ENCODE measurements at regions of chr5 and their contacts with region 1.

Region 1: GRCh38 chr5:139696894-139697658 is 48.9 kb downstream of the CXXC5 start:
- DNase-seq: no peak
- ATAC-seq: peak; percentile 46
- H3K4me3 ChIP-seq: 0 out of 2 replicates have a peak overlapping the region, but pooled peaks have one; percentile 17
- H3K27ac ChIP-seq: no peak overlapping the region
- H3K4me1 ChIP-seq: peaks cover 12% of the 10 kb centered on the region
- H3K27me3 ChIP-seq: peaks cover 0 to 3% of the 10 kb centered on the region in 2 experiments; a peak in 2 of 4 replicates
- CTCF ChIP-seq: no peak
- EP300 ChIP-seq: no peak
- POLR2A ChIP-seq: no peak
- RAD21 ChIP-seq: no peak

Region 2: GRCh38 chr5:139740138-139740991 is 43.3 kb after region 1 on chr5:
- CTCF ChIA-PET with region 1: interaction called, 8 read pairs
- POLR2A ChIA-PET with region 1: interaction called, 5 read pairs
- RAD21 ChIA-PET with region 1: interaction called, 23 read pairs
- SMC1A ChIA-PET with region 1: interaction called, 35 read pairs
- in situ Hi-C with region 1: no loop called
- intact Hi-C with region 1: no loop called
- DNase-seq: no peak
- ATAC-seq: peak; percentile 40
- H3K4me3 ChIP-seq: no peak overlapping the region
- H3K27ac ChIP-seq: no peak overlapping the region
- H3K4me1 ChIP-seq: peaks cover 25% of the 10 kb centered on the region
- H3K27me3 ChIP-seq: no peaks in the 10 kb centered on the region
- CTCF ChIP-seq: no peak
- EP300 ChIP-seq: no peak
- POLR2A ChIP-seq: no peak
- RAD21 ChIP-seq: no peak

Region 3: GRCh38 chr5:139904816-139905661 is 208.0 kb after region 1 on chr5:
- CTCF ChIA-PET with region 1: no interaction called
- POLR2A ChIA-PET with region 1: no interaction called
- RAD21 ChIA-PET with region 1: no interaction called
- SMC1A ChIA-PET with region 1: no interaction called
- in situ Hi-C with region 1: no loop called
- intact Hi-C with region 1: no loop called
- DNase-seq: no peak
- ATAC-seq: peak; percentile 20
- H3K4me3 ChIP-seq: peak overlapping the region; percentile 46; the same call in 1 of the 2 replicates
- H3K27ac ChIP-seq: no peak overlapping the region
- H3K4me1 ChIP-seq: no peaks in the 10 kb centered on the region; the same call in 1 of the 2 replicates
- H3K27me3 ChIP-seq: peaks cover 0 to 13% of the 10 kb centered on the region in 2 experiments; a peak in 2 of 4 replicates
- CTCF ChIP-seq: no peak
- EP300 ChIP-seq: no peak
- POLR2A ChIP-seq: no peak
- RAD21 ChIP-seq: no peak

Measured in GM12878 (cell line).